ENCODE measurements at regions of chr5 and their contacts with region 1.

Region 1: GRCh38 chr5:40198736-40199135 is 481.0 kb upstream of the PTGER4 start:
- DNase-seq: no peak
- ATAC-seq: no peak
- H3K4me3 Mint-ChIP-seq: no peak overlapping the region
- H3K27ac Mint-ChIP-seq: no peak overlapping the region
- H3K4me1 Mint-ChIP-seq: peaks cover 6% of the 10 kb centered on the region
- H3K27me3 Mint-ChIP-seq: no peaks in the 10 kb centered on the region

Region 2: DNA sequence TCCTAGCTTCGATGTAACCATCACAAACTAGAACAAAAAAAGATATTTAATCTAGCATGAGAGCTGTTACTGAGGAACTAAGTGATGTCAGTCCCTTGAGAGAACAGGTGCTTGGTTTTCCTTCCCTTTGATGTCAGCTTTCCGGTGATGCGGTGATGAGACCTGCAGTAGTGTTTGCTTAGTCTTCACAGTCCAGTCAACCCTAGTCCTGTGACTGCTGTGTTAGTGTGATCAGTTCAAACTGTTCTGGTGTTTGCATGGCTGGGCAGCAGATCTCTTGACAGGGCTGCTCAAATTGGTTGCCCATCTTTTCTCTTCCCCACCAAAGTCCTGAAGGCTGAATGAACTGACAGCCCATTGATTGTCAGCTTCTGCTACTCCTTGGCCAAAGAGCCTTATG is 165.3 kb before region 1 on chr5:
- CTCF ChIA-PET with region 1: no interaction called
- POLR2A ChIA-PET with region 1: no interaction called
- intact Hi-C with region 1: loop called in 1 of 2 experiments (anchors 10 kb)
- DNase-seq: peak; percentile 19
- ATAC-seq: peak; percentile 71
- H3K4me3 Mint-ChIP-seq: no peak overlapping the region
- H3K27ac Mint-ChIP-seq: no peak overlapping the region
- H3K4me1 Mint-ChIP-seq: peaks cover 12% of the 10 kb centered on the region
- H3K27me3 Mint-ChIP-seq: peaks cover 3% of the 10 kb centered on the region